ENCODE measurements at regions of chr12 and their contacts with region 1.

Region 1: GRCh38 chr12:121060149-121061001 is 21.3 kb upstream of the OASL start:
- DNase-seq: peak; percentile 63
- ATAC-seq: peak; percentile 91
- H3K4me3 ChIP-seq: peak overlapping the region; percentile 45 to 78 (median 56)
- H3K27ac ChIP-seq: peak overlapping the region; percentile 32
- H3K4me1 ChIP-seq: peaks cover 19% of the 10 kb centered on the region
- H3K27me3 ChIP-seq: 0 out of 5 replicates have a peak, but pooled peaks cover 0 to 2% of the 10 kb centered on the region in 2 experiments
- CTCF ChIP-seq: peak; percentile 70
- EP300 ChIP-seq: no peak
- POLR2A ChIP-seq: no peak
- RAD21 ChIP-seq: peak; percentile 47; the same call in 1 of the 2 replicates

Region 2: DNA sequence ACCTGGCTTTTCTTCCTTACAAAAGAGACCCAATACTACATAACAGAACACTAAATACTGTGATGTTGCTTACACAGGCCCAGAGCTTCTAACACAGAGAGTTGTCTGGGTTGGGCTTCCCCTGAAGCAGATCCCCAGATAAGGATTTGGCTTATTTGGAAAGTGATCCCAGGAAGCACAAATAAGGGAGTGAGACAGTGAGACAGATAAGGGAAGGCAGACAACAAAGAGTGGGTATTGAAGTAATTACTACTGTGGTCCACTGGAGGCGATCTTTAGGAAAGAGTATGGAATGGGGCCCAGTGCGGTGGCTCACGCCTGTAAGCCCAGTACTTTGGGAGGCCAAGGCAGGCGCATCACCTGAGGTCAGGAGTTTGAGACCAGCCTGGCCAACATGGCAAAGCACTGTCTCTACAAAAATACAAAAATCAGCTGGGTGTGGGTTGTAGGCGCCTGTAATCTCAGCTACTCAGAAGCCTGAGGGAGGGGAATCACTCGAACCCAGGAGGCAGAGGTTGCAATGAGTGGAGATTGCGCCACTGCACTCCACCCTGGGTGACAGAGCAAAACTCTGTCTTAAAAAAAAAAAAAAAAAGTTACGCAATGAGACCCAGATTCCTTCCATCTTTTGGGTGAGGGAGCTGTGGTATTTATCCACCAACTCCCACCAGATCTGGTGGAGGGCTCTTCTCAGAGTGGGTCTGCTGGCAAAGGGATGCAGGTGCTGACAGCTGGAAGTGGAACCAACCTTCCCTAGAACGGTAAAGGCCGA is 33.9 kb before region 1 on chr12:
- CTCF ChIA-PET with region 1: no interaction called
- POLR2A ChIA-PET with region 1: interaction called, 4 read pairs
- in situ Hi-C with region 1: no loop called
- intact Hi-C with region 1: loop called (anchors 1 kb)
- DNase-seq: peak; percentile 91
- ATAC-seq: peak; percentile 87
- H3K4me3 ChIP-seq: peak overlapping the region in 1 of 3 experiments; percentile 54; a peak in 2 of 6 replicates
- H3K27ac ChIP-seq: peak overlapping the region; percentile 89
- H3K4me1 ChIP-seq: peaks cover 65% of the 10 kb centered on the region
- H3K27me3 ChIP-seq: peaks cover 0 to 3% of the 10 kb centered on the region in 2 experiments; a peak in 1 of 5 replicates
- CTCF ChIP-seq: peak; percentile 73
- EP300 ChIP-seq: no peak
- POLR2A ChIP-seq: no peak
- RAD21 ChIP-seq: peak; percentile 23; the same call in 1 of the 2 replicates

Region 3: DNA sequence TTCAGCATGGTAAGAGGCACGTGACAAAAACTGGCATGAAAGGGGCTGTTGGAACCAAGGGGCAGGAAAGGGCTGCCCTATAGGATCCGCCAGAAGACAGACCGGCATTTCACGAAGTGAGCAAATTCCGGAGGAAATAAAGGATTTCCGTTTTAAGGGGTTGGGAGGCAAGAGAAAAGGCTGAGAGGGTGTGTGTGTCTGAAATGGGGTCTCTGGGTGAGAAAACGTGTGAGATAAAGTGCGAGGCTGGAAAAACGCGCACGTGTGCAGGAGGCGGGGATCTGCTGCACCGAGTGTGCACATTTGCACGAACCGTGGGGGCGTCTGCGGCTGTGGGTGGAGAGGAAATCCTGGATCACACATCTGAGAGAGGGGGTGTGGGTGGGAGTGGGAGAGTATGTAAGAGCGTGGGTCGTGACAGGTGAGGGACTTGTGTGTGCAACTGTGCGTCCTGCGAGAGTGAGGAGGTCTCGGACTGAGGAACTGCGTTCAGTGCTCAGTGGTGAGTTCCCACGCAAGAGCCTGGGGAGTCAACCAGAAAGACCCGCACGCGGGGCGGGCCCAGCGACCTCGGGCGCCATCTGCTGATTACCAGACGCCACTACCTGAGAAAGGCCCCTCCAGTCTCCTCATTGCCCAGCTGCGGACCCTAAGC is 35.3 kb after region 1 on chr12:
- CTCF ChIA-PET with region 1: interaction called, 36 read pairs
- POLR2A ChIA-PET with region 1: no interaction called
- in situ Hi-C with region 1: loop called (anchors 5 kb)
- intact Hi-C with region 1: loop called (anchors 2 kb)
- DNase-seq: peak; percentile 25
- ATAC-seq: peak; percentile 96
- H3K4me3 ChIP-seq: peak overlapping the region in 1 of 3 experiments; percentile 61; a peak in 3 of 6 replicates
- H3K27ac ChIP-seq: no peak overlapping the region
- H3K4me1 ChIP-seq: peaks cover 11% of the 10 kb centered on the region
- H3K27me3 ChIP-seq: peaks cover 2 to 15% of the 10 kb centered on the region in 2 experiments; a peak in 4 of 5 replicates
- CTCF ChIP-seq: peak; percentile 92
- EP300 ChIP-seq: no peak
- POLR2A ChIP-seq: no peak
- RAD21 ChIP-seq: peak; percentile 87

Region 4: DNA sequence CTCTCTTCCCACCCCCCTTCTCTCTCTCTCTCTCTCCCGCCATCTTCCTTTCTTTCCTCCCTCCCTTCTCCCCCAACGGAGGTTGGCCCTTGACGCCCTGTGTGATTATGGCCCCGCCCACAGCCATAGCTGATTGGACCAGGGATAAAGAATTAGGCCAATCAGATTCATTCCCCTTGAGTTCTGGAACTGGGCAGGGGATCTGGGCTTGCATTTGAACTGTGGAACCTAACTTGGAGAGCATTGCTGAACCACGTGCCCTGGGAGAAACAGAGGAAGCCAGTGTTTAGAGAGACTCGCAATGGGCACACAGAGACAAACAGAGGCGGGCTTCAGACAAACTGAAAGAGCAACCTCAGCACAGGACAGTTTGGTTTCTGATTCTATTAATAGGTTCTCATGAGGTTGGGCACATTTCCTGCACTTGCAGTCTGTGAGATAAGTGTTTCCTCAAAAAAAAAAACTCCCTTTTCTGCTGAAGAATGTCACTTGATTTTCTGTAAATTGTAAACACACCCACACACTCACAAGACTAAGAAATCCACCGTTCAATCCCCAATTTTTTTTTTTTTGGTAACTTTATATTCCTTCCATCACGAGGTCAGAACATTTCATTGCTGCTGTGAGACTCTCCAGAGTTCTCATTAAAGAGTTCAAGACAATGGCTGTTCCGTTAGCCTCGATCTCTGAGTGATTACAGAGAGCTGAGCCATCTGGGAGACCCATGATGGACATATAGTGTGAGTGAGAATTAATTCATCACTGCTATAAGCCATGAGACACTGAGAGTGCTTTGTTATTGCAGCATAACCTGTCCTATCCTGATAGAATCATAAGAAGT is 68.8 kb after region 1 on chr12:
- CTCF ChIA-PET with region 1: no interaction called
- POLR2A ChIA-PET with region 1: no interaction called
- in situ Hi-C with region 1: no loop called
- intact Hi-C with region 1: no loop called
- DNase-seq: peak; percentile 78
- ATAC-seq: peak; percentile 61
- H3K4me3 ChIP-seq: no peak overlapping the region
- H3K27ac ChIP-seq: peak overlapping the region; percentile 5
- H3K4me1 ChIP-seq: peaks cover 92% of the 10 kb centered on the region
- H3K27me3 ChIP-seq: no peaks in the 10 kb centered on the region
- CTCF ChIP-seq: no peak
- EP300 ChIP-seq: no peak
- POLR2A ChIP-seq: no peak
- RAD21 ChIP-seq: no peak

Region 5: GRCh38 chr12:121230538-121230907 is 170.1 kb after region 1 on chr12:
- CTCF ChIA-PET with region 1: no interaction called
- POLR2A ChIA-PET with region 1: no interaction called
- in situ Hi-C with region 1: no loop called
- intact Hi-C with region 1: loop called (anchors 5 kb)
- DNase-seq: no peak
- ATAC-seq: peak; percentile 5
- H3K4me3 ChIP-seq: no peak overlapping the region
- H3K27ac ChIP-seq: no peak overlapping the region
- H3K4me1 ChIP-seq: peaks cover 31% of the 10 kb centered on the region
- H3K27me3 ChIP-seq: no peaks in the 10 kb centered on the region
- CTCF ChIP-seq: no peak
- EP300 ChIP-seq: no peak
- POLR2A ChIP-seq: no peak
- RAD21 ChIP-seq: no peak; the same call in 1 of the 2 replicates